HEK293T (cell line): ENCODE measurements at regions of chr1 and their contacts with region 1.

Region 1: DNA sequence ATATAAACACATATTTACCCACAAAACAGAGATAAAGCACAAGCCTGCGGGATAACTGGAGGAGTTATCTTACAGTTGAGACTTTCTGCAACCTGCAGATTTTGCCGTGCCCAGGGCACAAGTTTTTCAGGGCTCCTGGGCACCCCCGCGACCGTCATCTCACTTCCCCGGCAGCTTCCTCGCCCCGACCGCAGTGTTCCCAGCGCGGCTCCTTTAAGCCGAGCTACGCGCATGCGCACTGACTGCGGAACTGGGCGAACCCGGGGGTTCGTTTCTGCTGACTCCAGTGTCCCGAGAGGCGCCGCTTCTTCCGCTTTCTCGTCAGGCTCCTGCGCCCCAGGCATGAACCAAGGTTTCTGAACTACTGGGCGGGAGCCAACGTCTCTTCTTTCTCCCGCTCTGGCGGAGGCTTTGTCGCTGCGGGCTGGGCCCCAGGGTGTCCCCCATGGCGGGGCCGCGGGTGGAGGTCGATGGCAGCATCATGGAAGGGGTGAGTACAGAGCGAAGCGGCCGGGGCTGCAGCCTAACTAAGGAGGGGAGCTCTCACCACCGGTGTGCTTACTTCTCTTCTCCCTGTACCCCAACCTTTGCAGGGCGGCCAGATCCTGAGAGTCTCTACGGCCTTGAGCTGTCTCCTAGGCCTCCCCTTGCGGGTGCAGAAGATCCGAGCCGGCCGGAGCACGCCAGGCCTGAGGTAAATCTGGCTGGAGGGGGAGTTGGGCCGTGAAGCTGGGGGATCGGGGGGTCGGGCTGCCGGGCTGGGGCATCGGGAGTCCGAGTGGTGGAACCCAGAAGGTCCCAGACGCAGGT is at the start of gene RTCA:
- DNase-seq: peak; percentile 99

Region 2: GRCh38 chr1:100028765-100029164 is 237.4 kb before region 1 on chr1:
- CTCF ChIA-PET with region 1: no interaction called
- POLR2A ChIA-PET with region 1: no interaction called
- DNase-seq: no peak

Region 3: DNA sequence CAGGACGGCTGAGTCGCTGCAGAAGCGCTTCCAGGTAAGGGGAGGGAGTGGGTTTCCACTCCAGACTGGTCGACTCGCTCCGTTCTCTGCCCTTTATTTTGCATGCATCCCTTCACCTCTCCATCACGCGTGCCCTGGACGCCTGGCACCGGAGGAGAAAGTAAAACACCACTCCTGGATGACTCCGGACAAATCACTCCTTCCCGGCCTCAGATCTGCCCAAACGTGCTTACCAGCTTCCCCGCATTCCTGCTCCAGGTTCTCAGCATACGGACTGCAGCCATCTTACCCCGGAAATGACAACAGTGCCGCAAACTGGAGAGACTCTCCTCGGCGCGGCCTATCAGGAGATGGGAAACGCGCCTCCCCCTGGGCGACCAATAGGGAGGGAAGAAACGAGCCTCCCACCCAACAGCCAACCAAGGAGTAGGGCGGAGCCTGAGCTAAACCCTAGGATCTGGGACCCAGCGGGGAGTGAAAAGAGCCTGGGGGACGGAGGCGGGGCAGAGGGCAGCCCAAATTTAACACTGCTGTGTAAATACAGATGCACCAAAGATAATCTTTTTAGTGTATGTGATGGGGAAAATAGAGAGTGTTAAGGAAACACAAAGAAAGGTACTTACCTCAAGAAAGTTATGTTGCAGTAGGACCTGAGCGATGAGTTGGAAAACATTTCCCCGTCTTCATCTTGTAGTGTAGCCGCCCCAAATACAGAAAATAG is 16.4 kb before region 1 on chr1 and contains the start of gene DBT:
- CTCF ChIA-PET with region 1: interaction called, 3 read pairs
- POLR2A ChIA-PET with region 1: interaction called, 23 read pairs
- DNase-seq: peak; percentile 99

Region 4: GRCh38 chr1:100351095-100351891 is 85.2 kb after region 1 on chr1:
- CTCF ChIA-PET with region 1: no interaction called
- POLR2A ChIA-PET with region 1: interaction called, 23 read pairs
- DNase-seq: peak; percentile 83